Right cardiac atrium (tissue), 5 donors: ENCODE measurements at regions of chr9 and their contacts with region 1.

Region 1: DNA sequence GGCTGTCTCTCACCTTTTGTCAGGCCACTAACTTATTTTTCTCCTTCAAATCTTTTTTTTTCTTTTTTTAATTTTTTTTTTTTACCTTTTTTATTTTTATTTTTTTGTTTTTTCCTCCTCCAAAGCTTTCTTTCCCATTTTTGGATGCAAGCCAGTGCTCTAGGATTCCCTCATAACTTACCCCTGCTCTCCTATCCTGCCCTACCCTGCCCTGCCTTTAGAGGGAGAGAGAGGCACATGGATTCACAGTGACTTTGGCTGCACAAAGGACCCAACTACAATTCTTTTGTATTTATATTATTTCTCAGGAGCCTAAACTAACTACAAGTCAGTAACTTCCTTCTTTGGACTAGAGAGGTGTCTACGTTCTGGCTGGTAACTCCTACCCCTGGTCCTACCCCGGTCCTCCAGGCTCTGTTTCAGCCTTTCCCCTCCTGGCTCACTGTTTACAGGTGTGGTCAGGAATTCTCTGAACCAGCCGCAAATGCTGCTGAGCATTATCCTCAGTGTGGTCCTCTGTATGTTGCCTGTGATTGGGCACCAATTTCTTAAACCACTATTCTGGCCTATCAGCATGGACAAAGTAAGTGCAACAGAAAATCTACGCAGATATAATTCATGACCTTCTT is 8.4 kb upstream of the RUSC2 start:
- DNase-seq: peak in 1 of 3 donors; percentile 45
- ATAC-seq: peak in 1 of 2 donors; percentile 64
- H3K4me3 ChIP-seq: no peak overlapping the region
- H3K27ac ChIP-seq: no peak overlapping the region
- H3K4me1 ChIP-seq: no peaks in the 10 kb centered on the region
- H3K27me3 ChIP-seq: no peaks in the 10 kb centered on the region

Region 2: DNA sequence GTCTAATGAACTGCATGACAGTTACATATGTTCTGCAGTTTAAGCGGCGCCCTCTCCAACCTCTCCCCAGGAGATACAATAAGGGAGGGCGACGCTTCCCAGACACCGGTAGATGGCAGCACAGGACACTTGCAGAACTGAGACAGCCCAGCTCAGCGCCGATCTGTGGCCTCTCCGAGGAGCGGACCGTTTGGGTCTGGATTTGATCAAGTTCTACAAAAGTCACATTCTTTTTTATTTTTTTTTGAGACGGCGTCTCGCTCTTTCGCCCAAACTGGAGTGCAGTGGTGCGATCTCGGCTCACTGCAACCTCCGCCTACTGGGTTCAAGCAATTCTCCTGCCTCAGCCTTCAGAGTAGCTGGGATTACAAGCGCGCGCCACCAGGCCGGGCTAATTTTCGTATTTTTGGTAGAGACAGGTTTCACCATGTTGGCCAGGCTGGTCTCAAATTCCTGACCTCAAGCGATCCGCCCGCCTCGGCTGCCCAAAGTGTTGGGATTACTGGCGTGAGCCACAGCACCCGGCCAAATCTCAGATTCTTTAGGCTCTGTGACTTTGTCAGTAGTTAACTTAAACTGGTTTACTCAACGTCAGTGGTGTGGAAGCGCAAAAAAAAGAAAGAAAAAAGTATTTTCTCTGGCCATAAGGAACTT is 364.4 kb before region 1 on chr9:
- intact Hi-C with region 1: loop called (anchors 2 to 5 kb)
- DNase-seq: peak; percentile 92 to 95 (median 94)
- ATAC-seq: peak; percentile 75 to 81
- H3K4me3 ChIP-seq: peak overlapping the region; percentile 58
- H3K27ac ChIP-seq: no peak overlapping the region
- H3K4me1 ChIP-seq: peaks cover 4% of the 10 kb centered on the region
- H3K27me3 ChIP-seq: no peaks in the 10 kb centered on the region

Region 3: DNA sequence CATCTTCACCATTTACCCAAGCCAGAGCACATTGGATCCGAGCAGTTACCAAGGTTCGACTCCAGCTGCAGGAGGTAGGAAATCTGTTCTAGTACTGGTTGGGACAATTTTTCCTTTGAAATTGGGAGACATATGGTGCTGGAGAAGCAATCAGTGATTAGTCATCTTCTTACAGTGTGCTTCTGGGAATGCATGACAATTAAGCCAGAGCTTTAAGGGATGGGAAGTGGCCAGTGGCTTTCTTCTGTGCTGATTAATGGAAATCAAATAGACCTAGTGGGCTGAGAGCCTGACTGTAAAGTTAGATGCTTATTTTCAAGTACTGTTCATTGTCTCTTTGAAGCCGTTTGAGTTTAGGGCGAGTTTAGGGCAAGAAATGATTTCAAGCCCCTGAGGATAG is 167.5 kb before region 1 on chr9:
- intact Hi-C with region 1: loop called in 2 of 4 experiments (anchors 5 to 10 kb)
- DNase-seq: no peak
- ATAC-seq: no peak
- H3K4me3 ChIP-seq: no peak overlapping the region
- H3K27ac ChIP-seq: no peak overlapping the region
- H3K4me1 ChIP-seq: peaks cover 4% of the 10 kb centered on the region
- H3K27me3 ChIP-seq: no peaks in the 10 kb centered on the region

Region 4: DNA sequence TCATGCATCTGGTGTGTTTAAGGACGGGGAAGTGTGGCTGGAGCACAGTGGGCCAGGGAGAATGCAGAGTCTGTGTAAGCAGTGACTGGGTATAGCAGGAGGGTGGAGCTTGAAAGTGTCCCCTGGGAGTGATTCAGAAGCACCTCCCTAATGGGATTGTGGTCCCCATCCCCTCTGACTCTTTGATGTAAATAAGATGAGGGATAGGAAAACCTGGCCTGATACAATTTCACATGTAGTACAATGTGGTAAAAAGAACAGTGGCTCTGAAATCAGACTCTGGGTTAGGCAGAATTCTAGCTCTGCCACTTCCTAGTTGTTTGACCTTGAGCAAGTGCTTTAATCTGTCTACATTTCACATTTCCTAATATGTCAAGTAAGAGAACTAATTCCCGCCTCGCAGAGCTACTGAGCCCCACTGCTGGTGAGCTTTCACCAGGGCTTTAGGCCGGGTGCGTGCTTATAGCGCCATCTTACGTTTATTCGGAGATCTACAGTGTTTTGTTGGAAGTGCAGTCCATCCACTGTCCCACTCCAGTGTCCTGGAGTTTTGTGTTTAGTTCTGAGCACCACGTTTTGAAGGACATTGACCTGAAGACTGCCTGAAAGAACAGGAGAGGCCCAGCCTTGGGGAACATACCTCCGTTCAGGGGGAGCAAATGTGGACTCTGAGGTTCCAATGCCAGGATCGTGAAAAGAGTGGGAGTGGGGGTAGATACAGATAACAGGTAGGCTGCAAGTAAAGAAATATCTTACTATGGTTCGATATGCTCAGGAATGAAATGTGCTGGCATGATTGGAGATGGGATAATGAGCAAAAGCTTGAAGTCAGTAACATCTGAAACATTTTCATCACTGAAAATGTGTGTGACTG is 72.4 kb after region 1 on chr9:
- intact Hi-C with region 1: loop called in 2 of 4 experiments (anchors 2 to 5 kb)
- DNase-seq: peak; percentile 75 to 88 (median 83)
- ATAC-seq: peak; percentile 86 to 89
- H3K4me3 ChIP-seq: no peak overlapping the region
- H3K27ac ChIP-seq: no peak overlapping the region
- H3K4me1 ChIP-seq: peaks cover 2% of the 10 kb centered on the region
- H3K27me3 ChIP-seq: no peaks in the 10 kb centered on the region